ENCODE measurements at regions of chr1 and their contacts with region 1.

Region 1: GRCh38 chr1:92817986-92818764 is 13.7 kb upstream of the RPL5 start:
- DNase-seq: peak; percentile 32
- H3K4me3 ChIP-seq: no peak overlapping the region
- H3K27ac ChIP-seq: no peak overlapping the region
- H3K4me1 ChIP-seq: no peaks in the 10 kb centered on the region
- H3K27me3 ChIP-seq: no peaks in the 10 kb centered on the region
- CTCF ChIP-seq: peak; percentile 64 to 66
- POLR2A ChIP-seq: no peak

Region 2: GRCh38 chr1:92310185-92310597 is 508.0 kb before region 1 on chr1:
- CTCF ChIA-PET with region 1: interaction called, 63 read pairs
- POLR2A ChIA-PET with region 1: no interaction called
- dilution Hi-C with region 1: no loop called
- intact Hi-C with region 1: loop called (anchors 5 kb)
- DNase-seq: peak; percentile 33
- H3K4me3 ChIP-seq: no peak overlapping the region
- H3K27ac ChIP-seq: no peak overlapping the region
- H3K4me1 ChIP-seq: no peaks in the 10 kb centered on the region
- H3K27me3 ChIP-seq: no peaks in the 10 kb centered on the region
- CTCF ChIP-seq: peak; percentile 23 to 28
- POLR2A ChIP-seq: no peak

Region 3: DNA sequence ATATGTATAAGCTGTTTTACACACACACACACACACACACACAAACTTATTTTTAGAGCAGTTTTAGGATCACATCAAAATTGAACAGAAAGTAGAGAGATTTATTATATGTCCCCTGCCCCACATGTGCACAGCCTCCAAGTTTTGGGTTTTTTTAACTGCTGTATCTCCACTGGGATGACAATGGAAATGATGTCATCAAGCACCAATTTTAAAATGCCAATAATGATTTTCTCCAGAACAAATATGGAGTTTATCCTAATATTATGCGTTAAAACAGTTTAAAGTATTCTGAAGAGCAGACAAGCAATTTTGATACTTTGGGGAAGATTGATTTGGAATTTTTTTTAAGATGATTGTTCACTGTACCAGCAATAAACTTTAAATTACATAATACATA is 388.1 kb before region 1 on chr1:
- CTCF ChIA-PET with region 1: no interaction called
- POLR2A ChIA-PET with region 1: no interaction called
- dilution Hi-C with region 1: no loop called
- intact Hi-C with region 1: no loop called
- DNase-seq: no peak
- H3K4me3 ChIP-seq: no peak overlapping the region
- H3K27ac ChIP-seq: no peak overlapping the region
- H3K4me1 ChIP-seq: no peaks in the 10 kb centered on the region
- H3K27me3 ChIP-seq: no peaks in the 10 kb centered on the region
- CTCF ChIP-seq: no peak
- POLR2A ChIP-seq: no peak

Region 4: GRCh38 chr1:92623187-92623778 is 194.9 kb before region 1 on chr1:
- CTCF ChIA-PET with region 1: interaction called, 16 read pairs
- POLR2A ChIA-PET with region 1: no interaction called
- dilution Hi-C with region 1: no loop called
- intact Hi-C with region 1: loop called (anchors 10 kb)
- DNase-seq: peak; percentile 28
- H3K4me3 ChIP-seq: no peak overlapping the region
- H3K27ac ChIP-seq: no peak overlapping the region
- H3K4me1 ChIP-seq: no peaks in the 10 kb centered on the region
- H3K27me3 ChIP-seq: no peaks in the 10 kb centered on the region
- CTCF ChIP-seq: peak in 1 of 2 donors; percentile 6
- POLR2A ChIP-seq: no peak

Region 5: GRCh38 chr1:92736395-92736794 is 81.8 kb before region 1 on chr1:
- CTCF ChIA-PET with region 1: interaction called, 12 read pairs
- POLR2A ChIA-PET with region 1: no interaction called
- dilution Hi-C with region 1: no loop called
- intact Hi-C with region 1: no loop called
- DNase-seq: peak; percentile 23
- H3K4me3 ChIP-seq: no peak overlapping the region
- H3K27ac ChIP-seq: no peak overlapping the region
- H3K4me1 ChIP-seq: no peaks in the 10 kb centered on the region
- H3K27me3 ChIP-seq: no peaks in the 10 kb centered on the region
- CTCF ChIP-seq: peak in 1 of 2 donors; percentile 17
- POLR2A ChIP-seq: no peak

Region 6: DNA sequence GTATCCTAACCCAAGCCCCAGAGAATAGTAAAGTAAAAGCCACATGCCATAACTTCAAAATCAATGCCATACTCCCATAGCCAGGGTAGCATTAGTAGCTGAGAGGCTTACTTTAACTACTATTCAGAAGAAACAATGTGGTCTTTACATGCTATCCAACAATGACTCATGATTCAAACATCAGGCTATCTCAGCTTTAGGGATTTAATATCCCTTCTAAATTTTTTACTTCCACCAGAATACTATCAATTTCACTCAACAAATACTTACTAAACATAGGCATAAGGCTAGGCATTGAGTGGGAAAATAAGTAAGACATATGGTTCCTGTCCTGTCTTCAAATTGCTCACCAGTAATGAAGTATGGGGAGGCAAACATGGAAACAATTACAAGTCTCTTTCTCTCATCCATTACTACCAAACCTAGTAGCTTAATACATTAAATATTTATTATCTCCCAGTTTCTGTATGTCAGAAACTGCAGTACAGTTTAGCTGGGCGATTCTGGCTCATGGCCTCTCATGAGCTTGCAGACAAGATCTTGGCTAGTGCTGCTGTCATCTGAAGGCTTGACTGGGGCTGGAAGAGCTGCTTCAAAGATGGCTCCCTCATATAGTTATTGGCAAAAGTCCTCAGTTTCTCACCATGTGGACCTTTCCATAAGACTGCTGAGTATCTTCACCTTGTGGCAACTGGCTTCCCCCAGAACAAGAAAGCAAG is 64.0 kb before region 1 on chr1:
- CTCF ChIA-PET with region 1: interaction called, 151 read pairs
- POLR2A ChIA-PET with region 1: no interaction called
- dilution Hi-C with region 1: no loop called
- intact Hi-C with region 1: loop called (anchors 1 kb)
- DNase-seq: no peak
- H3K4me3 ChIP-seq: no peak overlapping the region
- H3K27ac ChIP-seq: no peak overlapping the region
- H3K4me1 ChIP-seq: peaks cover 14% of the 10 kb centered on the region
- H3K27me3 ChIP-seq: no peaks in the 10 kb centered on the region
- CTCF ChIP-seq: no peak
- POLR2A ChIP-seq: no peak

Region 7: DNA sequence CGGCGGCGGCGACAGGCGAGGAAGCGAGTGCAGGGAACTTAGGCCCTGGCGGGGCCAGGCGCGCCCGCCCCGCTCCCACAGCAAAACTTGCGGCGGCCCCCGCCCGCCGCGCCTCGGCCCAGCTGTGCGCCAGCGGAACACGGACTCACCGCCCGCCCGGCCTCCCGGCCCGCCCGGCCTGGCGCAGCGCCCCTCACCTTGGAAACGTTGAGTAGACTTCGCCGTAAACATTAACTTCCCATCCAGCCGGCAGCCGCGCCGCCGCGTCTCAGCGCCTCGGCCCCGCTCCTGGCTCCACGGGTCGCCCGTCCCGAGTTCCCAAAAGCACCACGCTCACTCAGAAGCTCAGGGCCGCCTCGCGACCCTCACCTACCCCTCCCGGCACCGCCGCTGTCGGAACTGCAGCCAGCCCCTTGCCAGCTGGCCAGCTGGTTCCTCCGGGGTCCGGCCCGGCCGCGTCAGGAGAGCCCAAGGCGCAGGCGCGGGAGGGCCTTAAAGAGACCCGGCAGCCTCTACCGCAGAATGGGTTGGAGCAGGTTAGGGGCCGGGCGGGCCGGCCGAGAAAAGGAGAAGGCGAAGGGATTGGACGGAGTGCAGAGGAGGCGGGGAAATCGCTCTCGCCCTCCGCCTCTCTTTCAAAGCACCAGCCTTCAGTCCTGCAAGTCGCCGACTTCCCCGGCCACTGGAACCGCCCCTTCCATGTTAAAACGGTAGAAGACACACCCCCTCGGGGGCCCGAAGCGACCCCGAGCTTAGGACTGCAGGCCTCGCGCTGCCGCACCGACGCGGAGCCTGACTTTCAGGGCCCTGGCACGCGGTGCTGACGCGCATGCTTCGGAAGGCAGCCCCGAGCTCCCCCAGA is 33.3 kb before region 1 on chr1 and contains the start of gene EVI5:
- CTCF ChIA-PET with region 1: interaction called, 43 read pairs
- POLR2A ChIA-PET with region 1: no interaction called
- dilution Hi-C with region 1: no loop called
- intact Hi-C with region 1: loop called (anchors 1 kb)
- DNase-seq: peak; percentile 99
- H3K4me3 ChIP-seq: peak within 1 kb of the TSS; percentile 73 to 88 (median 77)
- H3K27ac ChIP-seq: peak within 1 kb of the TSS; percentile 97
- H3K4me1 ChIP-seq: peaks cover 3% of the 10 kb centered on the region
- H3K27me3 ChIP-seq: no peaks in the 10 kb centered on the region
- CTCF ChIP-seq: no peak
- POLR2A ChIP-seq: peak; percentile 78
- total RNA-seq, gene EVI5: 26.2 and 34.4 TPM in 2 replicates

Region 8: GRCh38 chr1:92804721-92805169 is 13.4 kb before region 1 on chr1:
- CTCF ChIA-PET with region 1: interaction called, 21 read pairs
- POLR2A ChIA-PET with region 1: no interaction called
- dilution Hi-C with region 1: no loop called
- intact Hi-C with region 1: no loop called
- DNase-seq: peak; percentile 97
- H3K4me3 ChIP-seq: no peak overlapping the region
- H3K27ac ChIP-seq: peak overlapping the region; percentile 94
- H3K4me1 ChIP-seq: peaks cover 15% of the 10 kb centered on the region
- H3K27me3 ChIP-seq: no peaks in the 10 kb centered on the region
- CTCF ChIP-seq: no peak
- POLR2A ChIP-seq: peak; percentile 55

Region 9: GRCh38 chr1:92858564-92859399 is 40.6 kb after region 1 on chr1:
- CTCF ChIA-PET with region 1: no interaction called
- POLR2A ChIA-PET with region 1: no interaction called
- dilution Hi-C with region 1: no loop called
- intact Hi-C with region 1: no loop called
- DNase-seq: peak; percentile 81
- H3K4me3 ChIP-seq: no peak overlapping the region
- H3K27ac ChIP-seq: no peak overlapping the region
- H3K4me1 ChIP-seq: no peaks in the 10 kb centered on the region
- H3K27me3 ChIP-seq: peaks cover 2 to 6% of the 10 kb centered on the region in 2 experiments
- CTCF ChIP-seq: peak; percentile 66 to 93
- POLR2A ChIP-seq: no peak

Region 10: DNA sequence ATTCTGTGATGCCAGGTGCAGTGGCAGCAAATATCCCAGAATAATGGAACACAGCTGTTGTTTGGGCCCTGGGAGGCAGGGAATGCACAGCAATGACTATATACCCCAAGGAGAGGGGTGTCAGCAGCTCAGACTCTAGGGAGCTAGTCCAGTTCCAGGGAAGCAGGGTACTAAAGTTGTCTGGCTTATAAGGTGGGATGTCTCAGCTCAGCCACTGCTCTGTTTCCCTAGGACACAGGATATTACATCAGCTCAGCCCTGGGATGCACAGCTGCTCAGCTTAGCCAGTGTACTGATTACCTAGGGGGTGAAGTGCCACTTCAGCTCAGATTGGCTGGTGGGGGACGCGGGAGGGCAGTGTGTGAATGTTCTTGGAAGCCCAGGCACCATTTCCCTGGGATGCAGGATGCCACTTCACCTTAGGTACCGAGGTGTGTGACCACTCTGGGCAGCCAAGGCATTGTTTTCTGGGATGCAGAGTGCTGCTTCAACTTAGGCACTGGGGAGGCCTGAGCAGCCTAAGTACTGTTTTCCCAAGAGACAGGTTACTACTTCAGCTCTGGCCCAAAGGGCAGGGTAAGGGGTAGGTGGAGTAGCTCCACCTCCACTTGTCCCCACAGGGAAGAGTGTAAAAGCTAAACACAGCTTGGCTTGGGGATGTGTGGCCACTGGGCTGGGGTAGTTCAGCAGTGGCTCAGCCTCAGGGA is 83.7 kb after region 1 on chr1:
- CTCF ChIA-PET with region 1: no interaction called
- POLR2A ChIA-PET with region 1: no interaction called
- dilution Hi-C with region 1: no loop called
- intact Hi-C with region 1: no loop called
- DNase-seq: no peak
- H3K4me3 ChIP-seq: no peak overlapping the region
- H3K27ac ChIP-seq: no peak overlapping the region
- H3K4me1 ChIP-seq: no peaks in the 10 kb centered on the region
- H3K27me3 ChIP-seq: peaks cover 0 to 2% of the 10 kb centered on the region in 2 experiments
- CTCF ChIP-seq: no peak
- POLR2A ChIP-seq: no peak

Measured in endothelial cell of umbilical vein (primary cell).